Esophagus muscularis mucosa (tissue), 4 donors: ENCODE measurements at regions of chr18 and their contacts with region 1.

Region 1: DNA sequence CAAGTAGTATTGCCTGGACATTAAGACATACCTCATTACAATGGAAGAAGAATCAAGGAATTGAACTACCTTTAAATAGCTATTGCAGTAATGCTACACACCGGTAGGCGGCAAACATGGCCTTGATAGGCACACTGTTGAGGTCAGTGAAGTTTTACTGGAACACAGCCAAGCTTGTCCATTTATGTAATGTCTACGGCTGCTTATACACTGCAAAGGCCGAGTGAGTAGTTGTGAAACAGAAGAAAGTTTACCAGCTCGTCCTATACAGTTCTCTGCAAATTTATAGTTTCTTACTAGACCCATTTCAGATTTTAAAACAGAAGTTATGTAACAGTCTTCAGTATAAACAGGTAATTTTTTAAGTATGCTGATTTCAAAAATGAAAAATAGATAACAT is 38.8 kb downstream of the PPP4R1 start:
- DNase-seq: no peak
- H3K4me3 ChIP-seq: no peak overlapping the region
- H3K27ac ChIP-seq: peak overlapping the region; percentile 4 to 37 (median 10)
- H3K4me1 ChIP-seq: peaks cover 6 to 16% (median 8%) of the 10 kb centered on the region in 4 donors
- H3K27me3 ChIP-seq: no peaks in the 10 kb centered on the region
- CTCF ChIP-seq: peak; percentile 89 to 94 (median 91)
- EP300 ChIP-seq: no peak
- POLR2A ChIP-seq: no peak

Region 2: GRCh38 chr18:9673296-9674251 is 98.0 kb after region 1 on chr18:
- intact Hi-C with region 1: loop called (anchors 10 kb)
- DNase-seq: peak; percentile 88
- H3K4me3 ChIP-seq: no peak overlapping the region
- H3K27ac ChIP-seq: no peak overlapping the region
- H3K4me1 ChIP-seq: peaks cover 0 to 9% (median 8%) of the 10 kb centered on the region in 4 donors
- H3K27me3 ChIP-seq: no peaks in the 10 kb centered on the region
- CTCF ChIP-seq: peak; percentile 32 to 43 (median 43)
- EP300 ChIP-seq: no peak
- POLR2A ChIP-seq: no peak

Region 3: GRCh38 chr18:9771261-9771976 is 195.9 kb after region 1 on chr18:
- intact Hi-C with region 1: loop called (anchors 5 kb)
- DNase-seq: peak; percentile 94
- H3K4me3 ChIP-seq: peak overlapping the region in 1 of 4 donors; percentile 18
- H3K27ac ChIP-seq: peak overlapping the region in 3 of 4 donors; percentile 10 to 55 (median 48)
- H3K4me1 ChIP-seq: peaks cover 10 to 31% (median 18%) of the 10 kb centered on the region in 4 donors
- H3K27me3 ChIP-seq: no peaks in the 10 kb centered on the region
- CTCF ChIP-seq: peak; percentile 82 to 100 (median 90)
- EP300 ChIP-seq: no peak
- POLR2A ChIP-seq: no peak